ENCODE measurements at regions of chr7 and their contacts with region 1.

Region 1: DNA sequence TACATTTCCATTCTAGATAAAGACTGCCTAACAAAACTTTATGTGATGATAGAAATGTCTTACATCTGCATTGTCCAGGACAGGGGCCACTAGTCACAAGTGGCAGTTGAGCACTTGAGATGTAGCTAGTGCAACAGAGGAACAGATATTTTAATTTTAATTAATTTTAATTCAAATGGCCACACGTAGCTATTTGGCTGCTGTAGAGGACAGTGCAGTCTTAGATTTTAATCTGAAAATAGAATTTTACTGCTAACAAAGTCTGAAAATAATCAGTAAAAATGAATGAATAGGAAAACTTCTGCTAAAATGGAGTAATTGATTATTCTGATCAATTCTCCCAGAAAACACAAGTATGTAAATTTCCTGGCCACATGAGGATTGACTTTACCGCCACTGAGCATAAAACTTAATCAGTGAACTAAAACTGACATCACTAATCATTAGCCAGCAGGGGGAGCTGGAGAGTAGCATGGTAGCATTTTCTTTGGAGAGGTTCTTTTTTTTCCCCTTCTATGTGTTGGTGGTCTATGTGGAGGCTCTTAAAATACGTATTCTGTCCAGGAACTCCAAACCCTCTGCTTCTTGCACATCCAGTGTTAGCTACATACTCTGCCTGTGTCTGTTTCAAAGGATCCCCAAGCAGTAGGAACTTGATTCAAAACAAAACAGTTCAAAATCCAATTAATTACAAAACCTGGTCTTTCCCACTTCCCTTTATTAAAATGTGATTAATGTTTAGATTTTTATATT is 52.1 kb downstream of the TSPAN12 start:
- DNase-seq: peak; percentile 67
- ATAC-seq: no peak

Region 2: DNA sequence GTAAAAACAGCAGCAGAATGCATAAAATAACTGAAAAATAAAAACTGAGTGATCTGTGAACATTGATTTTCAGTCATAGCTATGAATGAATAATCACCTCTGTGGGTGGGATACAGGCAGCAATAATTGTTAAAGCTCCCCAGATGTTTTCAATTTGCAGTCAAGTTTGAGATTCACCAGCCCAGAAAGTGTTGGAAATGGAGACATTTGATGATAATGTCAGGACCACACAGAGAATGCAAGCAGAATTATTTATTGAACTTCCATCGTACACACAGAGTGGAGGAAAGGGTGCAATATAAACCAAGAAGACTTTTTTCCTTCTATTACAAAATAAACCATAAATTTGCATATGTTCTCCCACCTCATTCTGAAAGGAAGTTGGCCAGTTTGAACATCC is 1979.6 kb before region 1 on chr7:
- intact Hi-C with region 1: no loop called
- DNase-seq: no peak
- ATAC-seq: no peak

Region 3: GRCh38 chr7:120941064-120941463 is 135.3 kb after region 1 on chr7:
- intact Hi-C with region 1: loop called (anchors 10 kb)
- DNase-seq: no peak
- ATAC-seq: no peak